Activated CD4-positive, alpha-beta memory T cell treated with anti-CD3 and anti-CD28 coated beads for 36 hours (primary cell): ENCODE measurements at regions of chr2 and their contacts with region 1.

Region 1: DNA sequence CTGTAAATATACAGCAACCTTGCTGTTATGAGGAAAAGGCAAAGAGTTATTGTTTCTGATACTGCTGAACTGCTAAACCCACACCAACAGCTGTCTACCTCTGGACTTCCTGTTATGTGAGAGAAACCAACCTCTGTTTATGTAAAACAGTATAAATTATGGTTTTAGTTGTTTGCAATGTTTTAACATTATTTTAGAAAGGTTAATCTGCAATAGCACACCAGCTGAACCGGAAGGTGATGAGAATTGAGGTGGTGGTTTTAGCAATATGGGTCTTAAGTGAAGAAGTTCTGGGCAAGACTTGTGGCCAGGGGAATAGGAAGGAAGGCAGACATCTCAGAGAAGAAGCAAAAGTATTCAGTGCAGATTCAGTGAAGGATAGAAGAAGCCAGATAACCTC is 237.8 kb downstream of the PLCL1 start:
- DNase-seq: no peak
- H3K4me3 Mint-ChIP-seq: no peak overlapping the region
- H3K27ac Mint-ChIP-seq: no peak overlapping the region
- H3K4me1 Mint-ChIP-seq: peaks cover 24% of the 10 kb centered on the region
- H3K27me3 Mint-ChIP-seq: no peaks in the 10 kb centered on the region

Region 2: DNA sequence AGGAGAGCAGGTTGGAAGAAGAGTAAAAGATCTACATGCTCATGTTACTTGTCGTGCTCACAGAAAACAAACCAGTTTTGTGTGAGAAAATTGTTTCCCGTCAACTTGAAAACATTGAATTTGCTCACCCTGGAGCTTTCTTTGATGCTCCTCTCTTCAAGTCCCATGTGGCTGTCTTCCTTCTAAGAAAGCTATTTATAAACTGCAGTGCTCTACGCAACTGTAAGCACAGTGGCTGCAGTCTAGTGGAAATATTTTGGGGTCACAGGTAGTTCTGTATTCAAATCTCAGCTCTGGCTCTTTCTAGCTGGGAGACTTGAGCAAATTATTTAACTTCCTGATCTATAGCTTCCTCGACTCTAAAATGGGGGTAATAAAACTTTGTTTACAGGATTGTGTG is 25.9 kb before region 1 on chr2:
- CTCF ChIA-PET with region 1: interaction called, 4 read pairs
- POLR2A ChIA-PET with region 1: no interaction called
- intact Hi-C with region 1: loop called (anchors 2 kb)
- DNase-seq: no peak
- H3K4me3 Mint-ChIP-seq: no peak overlapping the region
- H3K27ac Mint-ChIP-seq: no peak overlapping the region
- H3K4me1 Mint-ChIP-seq: peaks cover 16% of the 10 kb centered on the region
- H3K27me3 Mint-ChIP-seq: no peaks in the 10 kb centered on the region

Region 3: DNA sequence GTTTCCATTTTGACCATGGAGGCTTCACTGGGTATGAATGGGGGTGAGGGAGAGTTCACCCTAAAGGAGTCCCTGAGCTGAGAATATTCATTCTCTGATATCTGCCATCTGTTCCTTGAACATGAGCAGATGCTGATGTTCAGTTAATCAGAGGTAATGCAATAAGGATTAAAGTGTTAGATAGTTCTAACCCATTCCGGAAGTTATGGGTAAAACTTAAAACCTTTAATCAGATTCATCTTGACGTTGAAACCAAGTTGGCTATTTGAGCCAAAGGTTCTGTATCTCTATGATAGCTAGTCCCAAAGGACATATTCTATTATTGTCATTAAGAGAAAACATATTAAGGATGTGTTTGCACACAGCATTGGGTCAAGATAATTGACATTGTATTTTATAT is 31.1 kb after region 1 on chr2:
- CTCF ChIA-PET with region 1: no interaction called
- POLR2A ChIA-PET with region 1: no interaction called
- intact Hi-C with region 1: no loop called
- DNase-seq: no peak
- H3K4me3 Mint-ChIP-seq: no peak overlapping the region
- H3K27ac Mint-ChIP-seq: no peak overlapping the region
- H3K4me1 Mint-ChIP-seq: no peaks in the 10 kb centered on the region
- H3K27me3 Mint-ChIP-seq: no peaks in the 10 kb centered on the region